ENCODE measurements at regions of chr12 and their contacts with region 1.

Region 1: DNA sequence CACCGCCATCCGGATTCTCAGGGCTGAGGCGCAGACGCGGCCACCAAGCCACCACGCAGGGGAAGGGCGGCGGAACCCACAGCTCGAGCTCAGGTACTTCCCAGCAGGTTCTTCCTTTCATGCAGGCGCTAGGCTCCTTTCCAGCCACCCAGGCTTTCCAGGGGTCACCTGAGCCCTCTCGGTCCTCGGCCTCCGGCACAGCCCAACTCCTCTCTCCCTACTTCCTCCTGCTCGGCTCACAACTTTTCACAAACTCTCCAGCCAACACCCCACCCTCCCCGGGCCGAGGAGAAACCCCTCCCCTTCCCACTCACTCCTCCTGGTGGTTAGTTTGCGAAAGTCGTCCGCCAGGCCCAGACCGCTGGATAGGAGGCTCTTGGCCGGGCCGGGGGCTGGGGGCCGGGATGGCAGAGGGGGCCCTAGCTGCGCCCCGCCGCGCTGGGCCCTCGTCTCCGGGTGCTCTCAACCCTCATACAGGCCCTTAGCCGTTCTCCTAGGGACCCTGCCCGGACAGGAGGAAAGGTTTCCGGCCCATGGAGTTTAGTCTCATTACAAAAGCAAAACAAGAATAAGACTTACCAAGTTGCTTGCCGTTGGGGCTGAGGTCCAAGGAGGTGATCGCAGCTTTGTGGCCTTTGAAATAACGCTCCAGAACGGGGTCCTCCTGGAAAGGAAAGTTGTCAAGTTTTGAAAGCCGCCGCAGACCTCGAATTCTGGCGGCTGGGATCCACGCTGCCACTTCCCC is at the start of gene GALNT4:
- DNase-seq: peak; percentile 90 to 96
- H3K4me3 ChIP-seq: peak within 1 kb of the TSS; percentile 79 to 97 (median 90)
- H3K27ac ChIP-seq: peak within 1 kb of the TSS; percentile 90 to 96 (median 92)
- H3K4me1 ChIP-seq: peaks cover 25 to 69% (median 46%) of the 10 kb centered on the region in 4 donors
- H3K27me3 ChIP-seq: no peaks in the 10 kb centered on the region
- CTCF ChIP-seq: peak in 6 of 7 experiments; percentile 7 to 79 (median 64)
- EP300 ChIP-seq: no peak
- POLR2A ChIP-seq: peak in 1 of 4 donors; percentile 70
- total RNA-seq, gene GALNT4: 0.45 to 111 (median 12.2) TPM

Region 2: DNA sequence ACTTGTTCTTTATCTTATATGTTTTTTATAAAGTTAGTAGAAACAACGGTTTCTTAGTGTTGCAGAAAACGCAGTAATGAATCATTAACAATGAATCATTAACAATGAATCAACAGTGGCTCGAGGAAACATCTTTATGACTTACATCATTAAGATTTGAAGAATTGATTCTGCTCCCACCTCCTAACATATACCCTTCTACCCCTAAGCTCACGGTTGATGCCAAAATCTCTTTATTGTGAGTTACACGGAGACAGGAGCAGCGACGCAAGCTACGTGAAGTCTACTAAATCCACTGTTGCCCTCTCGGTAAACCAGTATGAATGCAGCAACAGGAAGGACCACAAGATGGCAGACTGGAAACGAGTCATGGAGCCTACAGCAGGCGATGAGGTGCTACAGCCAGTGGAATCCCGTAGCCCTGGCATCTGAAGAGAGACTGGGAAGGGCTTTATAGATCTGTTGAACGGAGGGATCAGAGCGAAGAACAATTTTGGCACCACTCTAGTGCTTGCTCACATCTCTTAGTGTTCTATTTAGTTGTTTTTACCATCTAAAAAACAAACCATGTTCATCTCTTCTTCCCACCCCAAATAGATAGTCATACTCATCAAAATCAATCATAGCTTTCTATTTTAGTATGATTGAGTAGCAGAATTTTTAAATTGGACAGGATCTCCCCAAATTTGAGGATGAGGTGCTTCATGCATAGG is 505.1 kb before region 1 on chr12:
- intact Hi-C with region 1: loop called (anchors 10 kb)
- DNase-seq: peak; percentile 84 to 94
- H3K4me3 ChIP-seq: peak overlapping the region in 3 of 4 donors; percentile 18 to 32 (median 27)
- H3K27ac ChIP-seq: no peak overlapping the region
- H3K4me1 ChIP-seq: peaks cover 0 to 20% (median 13%) of the 10 kb centered on the region in 4 donors
- H3K27me3 ChIP-seq: no peaks in the 10 kb centered on the region
- CTCF ChIP-seq: peak in 5 of 7 experiments; percentile 70 to 89 (median 83)
- EP300 ChIP-seq: no peak
- POLR2A ChIP-seq: no peak

Region 3: DNA sequence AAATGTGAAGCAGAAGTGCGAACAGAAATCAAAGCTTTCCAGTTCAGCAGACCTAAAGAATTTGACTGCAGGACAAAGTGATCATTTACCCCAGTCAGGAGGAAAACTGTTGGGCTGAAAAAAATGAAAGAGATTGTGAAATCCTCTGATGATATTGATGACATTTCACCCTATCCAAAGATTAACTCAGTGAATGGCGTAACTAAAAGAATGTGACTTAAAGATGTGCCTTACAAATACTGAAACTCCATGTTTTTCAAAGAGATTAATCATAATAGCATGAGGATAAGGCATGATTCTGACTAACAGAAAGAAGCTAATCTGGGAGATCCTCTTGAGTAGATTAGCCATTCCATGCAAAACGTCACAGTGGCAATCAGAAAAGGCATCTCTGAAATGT is 398.0 kb before region 1 on chr12:
- intact Hi-C with region 1: no loop called
- DNase-seq: no peak
- H3K4me3 ChIP-seq: no peak overlapping the region
- H3K27ac ChIP-seq: no peak overlapping the region
- H3K4me1 ChIP-seq: no peaks in the 10 kb centered on the region
- H3K27me3 ChIP-seq: no peaks in the 10 kb centered on the region
- CTCF ChIP-seq: no peak
- EP300 ChIP-seq: no peak
- POLR2A ChIP-seq: no peak

Region 4: DNA sequence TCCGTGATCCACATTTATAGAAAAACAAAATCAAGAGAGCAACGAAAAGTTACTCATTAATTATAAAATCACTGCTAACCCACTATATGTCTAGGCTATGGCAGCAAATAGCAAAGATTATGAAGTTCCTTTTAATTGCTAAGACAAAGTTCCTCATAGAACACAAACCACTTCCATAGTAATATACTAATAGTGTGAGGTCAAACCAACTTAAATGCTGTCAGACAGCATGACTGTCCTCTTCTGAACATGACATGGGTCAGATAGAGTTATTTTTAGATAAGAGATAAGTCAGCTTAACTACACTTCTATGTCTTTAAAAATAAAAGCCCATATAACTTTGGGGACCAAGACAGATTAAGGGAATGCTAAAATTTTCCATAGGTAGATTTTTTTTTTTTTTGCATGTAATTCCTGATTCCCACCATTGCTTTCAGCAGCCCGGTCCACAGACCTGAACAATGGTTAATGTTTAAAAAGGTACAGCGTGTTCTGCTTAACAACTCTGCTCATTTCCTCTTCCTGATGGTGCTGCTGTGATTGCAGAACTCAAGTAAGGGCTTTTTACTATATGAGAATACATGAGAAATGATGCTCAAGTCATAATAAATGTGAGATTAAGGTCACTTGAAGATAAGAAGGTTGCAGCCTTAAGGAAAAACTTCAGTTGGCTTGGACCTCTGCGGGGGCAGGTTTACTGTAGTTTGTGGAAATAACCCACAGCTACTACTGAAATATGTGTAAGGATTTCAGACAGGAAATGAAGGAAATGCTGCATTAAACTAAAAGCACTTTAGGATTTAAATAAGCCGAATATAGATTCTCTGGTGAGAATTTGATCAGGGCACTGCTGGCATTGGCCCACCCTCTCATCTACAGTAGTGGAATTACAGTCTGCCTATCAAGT is 134.7 kb before region 1 on chr12:
- intact Hi-C with region 1: no loop called
- DNase-seq: peak in 1 of 2 donors; percentile 61
- H3K4me3 ChIP-seq: no peak overlapping the region
- H3K27ac ChIP-seq: peak overlapping the region in 4 of 5 donors; percentile 49 to 83 (median 54)
- H3K4me1 ChIP-seq: peaks cover 8 to 37% (median 29%) of the 10 kb centered on the region in 4 donors
- H3K27me3 ChIP-seq: no peaks in the 10 kb centered on the region
- CTCF ChIP-seq: no peak
- EP300 ChIP-seq: no peak
- POLR2A ChIP-seq: no peak

Region 5: GRCh38 chr12:89461649-89462612 is 62.8 kb before region 1 on chr12:
- intact Hi-C with region 1: no loop called
- DNase-seq: peak in 1 of 2 donors; percentile 71
- H3K4me3 ChIP-seq: peak overlapping the region in 3 of 4 donors; percentile 3 to 19 (median 14)
- H3K27ac ChIP-seq: peak overlapping the region in 2 of 5 donors; percentile 45 to 48
- H3K4me1 ChIP-seq: peaks cover 0 to 15% (median 7%) of the 10 kb centered on the region in 4 donors
- H3K27me3 ChIP-seq: no peaks in the 10 kb centered on the region
- CTCF ChIP-seq: peak in 5 of 7 experiments; percentile 26 to 84 (median 61)
- EP300 ChIP-seq: no peak
- POLR2A ChIP-seq: no peak

Measured in stomach (tissue), 19 donors.